ENCODE measurements at regions of chr16 and their contacts with region 1.

Region 1: DNA sequence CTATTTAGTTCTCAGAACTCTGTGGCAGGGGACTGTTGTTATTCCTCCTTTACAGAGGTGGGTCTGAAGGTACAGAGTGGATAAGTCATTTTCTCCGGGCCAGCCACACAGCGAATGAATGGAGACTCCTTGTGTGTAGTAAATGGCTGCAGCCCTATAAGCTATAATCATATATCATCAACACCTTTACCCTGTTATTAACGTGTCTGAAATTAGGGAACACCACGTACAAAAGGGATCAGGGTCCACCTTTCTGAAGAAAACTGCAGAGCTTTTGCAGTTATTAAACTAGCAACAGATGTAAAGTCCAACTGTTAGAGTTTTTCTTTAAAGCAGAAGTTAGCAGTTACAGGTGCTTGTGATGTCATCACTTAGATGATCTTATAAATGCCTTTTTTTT is 696.7 kb downstream of the MAF start:
- DNase-seq: no peak
- ATAC-seq: no peak
- H3K4me3 ChIP-seq: no peak overlapping the region
- H3K27ac ChIP-seq: no peak overlapping the region
- H3K4me1 ChIP-seq: no peaks in the 10 kb centered on the region
- H3K27me3 ChIP-seq: no peaks in the 10 kb centered on the region
- CTCF ChIP-seq: no peak

Region 2: GRCh38 chr16:78866521-78866920 is 37.3 kb before region 1 on chr16:
- CTCF ChIA-PET with region 1: no interaction called
- POLR2A ChIA-PET with region 1: no interaction called
- in situ Hi-C with region 1: no loop called
- intact Hi-C with region 1: no loop called
- DNase-seq: no peak
- ATAC-seq: no peak
- H3K4me3 ChIP-seq: no peak overlapping the region
- H3K27ac ChIP-seq: no peak overlapping the region
- H3K4me1 ChIP-seq: no peaks in the 10 kb centered on the region
- H3K27me3 ChIP-seq: no peaks in the 10 kb centered on the region
- CTCF ChIP-seq: no peak

Region 3: DNA sequence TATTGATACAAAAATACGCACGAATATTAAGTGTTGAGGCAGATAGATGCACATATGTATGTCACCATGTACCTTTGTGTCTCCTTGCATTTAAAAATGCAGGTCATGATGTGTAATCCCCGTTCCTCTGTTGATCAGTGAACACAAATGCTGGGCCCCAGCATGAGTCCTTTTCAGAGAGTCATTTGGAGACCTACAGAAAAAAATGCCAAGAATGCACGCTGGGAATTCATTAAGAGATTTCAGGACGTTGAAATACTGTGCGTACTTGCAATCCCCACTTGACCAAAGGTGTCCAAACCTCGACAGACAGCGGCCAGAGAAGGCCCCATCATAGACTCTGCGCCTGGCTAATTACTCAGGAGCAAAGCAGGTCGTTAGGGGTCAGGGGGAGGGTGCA is 200.7 kb after region 1 on chr16:
- CTCF ChIA-PET with region 1: interaction called, 21 read pairs
- POLR2A ChIA-PET with region 1: no interaction called
- in situ Hi-C with region 1: no loop called
- intact Hi-C with region 1: no loop called
- DNase-seq: no peak
- ATAC-seq: no peak
- H3K4me3 ChIP-seq: no peak overlapping the region
- H3K27ac ChIP-seq: no peak overlapping the region
- H3K4me1 ChIP-seq: no peaks in the 10 kb centered on the region
- H3K27me3 ChIP-seq: no peaks in the 10 kb centered on the region; the same call in 1 of the 2 replicates
- CTCF ChIP-seq: no peak